ENCODE measurements at regions of chr12 and their contacts with region 1.

Region 1: GRCh38 chr12:125065021-125065795 is at the start of gene AACS:
- DNase-seq: peak in 1 of 2 experiments; percentile 87
- H3K4me3 ChIP-seq: peak within 1 kb of the TSS; percentile 68 to 97 (median 76)
- H3K27ac ChIP-seq: no peak within 1 kb of the TSS; the same call in 1 of the 2 replicates
- H3K4me1 ChIP-seq: peaks cover 6 to 23% (median 11%) of the 10 kb centered on the region in 4 experiments
- H3K27me3 ChIP-seq: no peaks in the 10 kb centered on the region
- CTCF ChIP-seq: peak in 1 of 3 experiments; percentile 12; a peak in 2 of 4 replicates
- EP300 ChIP-seq: peak in 1 of 2 experiments; percentile 60; a peak in 1 of 3 replicates
- POLR2A ChIP-seq: peak; percentile 62 to 77
- RAD21 ChIP-seq: 0 out of 4 replicates have a peak, but pooled peaks of 1 of the 2 experiments have one; percentile 3
- total RNA-seq, gene AACS: 52.4 and 54.6 TPM in 2 replicates

Region 2: DNA sequence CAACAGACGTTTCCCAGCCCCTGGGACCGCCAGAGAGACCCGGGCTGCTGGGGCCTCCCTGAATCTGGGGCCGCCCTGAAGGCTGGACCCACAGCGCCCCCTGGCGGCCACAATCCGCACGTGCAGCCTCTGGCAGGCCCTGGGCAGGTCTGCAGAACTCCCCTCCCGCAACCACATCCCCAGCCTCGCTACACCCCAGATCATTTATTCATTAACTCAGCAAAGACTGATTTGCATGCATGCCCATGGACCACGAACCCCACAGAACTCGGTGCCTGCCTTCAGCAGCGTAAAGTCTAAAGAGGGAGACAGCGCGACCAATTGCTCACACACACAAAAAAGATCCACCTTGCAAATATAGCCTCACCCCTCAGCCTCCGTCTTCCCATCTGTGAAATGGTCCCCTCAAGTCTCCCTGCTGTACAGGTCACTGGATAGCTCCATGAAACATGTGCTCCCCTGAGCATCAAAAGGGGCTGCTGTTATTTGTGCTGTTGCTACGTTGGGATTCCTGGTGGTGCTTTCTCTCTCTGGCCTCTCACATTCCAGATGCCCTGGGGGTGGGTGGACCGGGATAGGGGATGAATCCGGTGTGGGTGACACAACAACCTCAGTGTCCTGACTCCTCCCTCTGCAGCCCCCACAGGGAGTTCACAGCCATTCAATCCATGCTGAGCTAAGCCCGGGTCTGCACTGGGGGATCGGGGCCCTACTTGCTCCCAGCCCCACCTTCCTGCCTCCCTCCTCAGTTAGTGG is 298.0 kb before region 1 on chr12:
- CTCF ChIA-PET with region 1: no interaction called
- POLR2A ChIA-PET with region 1: no interaction called
- DNase-seq: peak in 1 of 2 experiments; percentile 97
- H3K4me3 ChIP-seq: no peak overlapping the region
- H3K27ac ChIP-seq: no peak overlapping the region
- H3K4me1 ChIP-seq: peaks cover 0 to 6% (median 1%) of the 10 kb centered on the region in 4 experiments; a peak in 4 of 7 replicates
- H3K27me3 ChIP-seq: peaks cover 0 to 4% (median 0%) of the 10 kb centered on the region in 4 experiments; a peak in 2 of 7 replicates
- CTCF ChIP-seq: peak; percentile 90 to 94 (median 94)
- EP300 ChIP-seq: no peak
- POLR2A ChIP-seq: no peak
- RAD21 ChIP-seq: peak; percentile 97

Region 3: GRCh38 chr12:124992874-124993625 is 72.2 kb before region 1 on chr12:
- CTCF ChIA-PET with region 1: interaction called, 3 read pairs
- POLR2A ChIA-PET with region 1: interaction called, 14 read pairs
- DNase-seq: peak; percentile 84 to 88
- H3K4me3 ChIP-seq: peak overlapping the region; percentile 43 to 71 (median 60)
- H3K27ac ChIP-seq: no peak overlapping the region
- H3K4me1 ChIP-seq: peaks cover 0 to 8% (median 3%) of the 10 kb centered on the region in 4 experiments; a peak in 5 of 7 replicates
- H3K27me3 ChIP-seq: no peaks in the 10 kb centered on the region; a peak in 1 of 7 replicates
- CTCF ChIP-seq: peak; percentile 75 to 87 (median 84)
- EP300 ChIP-seq: 0 out of 3 replicates have a peak, but pooled peaks of 1 of the 2 experiments have one; percentile 17
- POLR2A ChIP-seq: peak; percentile 30 to 35; a peak in 1 of 3 replicates
- RAD21 ChIP-seq: peak; percentile 40 to 51; a peak in 3 of 4 replicates

Region 4: DNA sequence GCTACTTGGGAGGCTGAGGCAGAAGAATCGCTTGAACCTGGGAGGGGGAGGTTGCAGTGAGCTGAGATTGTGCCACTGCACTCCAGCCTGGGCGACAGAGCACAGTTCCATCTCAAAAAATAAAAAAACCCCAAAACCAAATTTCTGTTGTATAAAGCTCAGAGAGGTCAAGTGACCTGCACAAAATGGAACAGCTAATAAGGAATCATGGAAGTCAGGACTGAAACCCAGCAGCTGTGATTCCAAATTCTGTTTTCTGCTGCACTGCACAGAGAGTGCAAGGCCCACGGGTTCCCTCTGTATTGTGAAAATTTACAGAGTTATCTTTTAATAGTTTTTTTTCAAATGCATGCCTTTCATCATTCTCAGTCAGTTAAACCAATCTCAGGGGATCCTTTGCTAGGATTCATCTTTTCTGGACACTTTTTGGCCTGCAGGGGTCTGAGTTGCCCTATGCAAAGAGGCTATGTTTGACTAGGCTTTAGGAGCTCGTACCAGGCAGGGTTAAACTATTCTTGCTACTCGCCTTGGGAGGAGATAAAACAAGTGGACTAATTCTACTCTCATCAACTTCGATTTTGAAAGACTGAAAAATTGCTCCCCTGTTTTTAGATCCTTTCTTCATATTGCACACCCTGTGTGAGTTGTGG is 26.1 kb before region 1 on chr12:
- CTCF ChIA-PET with region 1: interaction called, 17 read pairs
- POLR2A ChIA-PET with region 1: interaction called, 3 read pairs
- DNase-seq: no peak
- H3K4me3 ChIP-seq: no peak overlapping the region
- H3K27ac ChIP-seq: no peak overlapping the region
- H3K4me1 ChIP-seq: no peaks in the 10 kb centered on the region
- H3K27me3 ChIP-seq: no peaks in the 10 kb centered on the region
- CTCF ChIP-seq: peak in 1 of 3 experiments; percentile 17; a peak in 1 of 4 replicates
- EP300 ChIP-seq: no peak
- POLR2A ChIP-seq: no peak
- RAD21 ChIP-seq: peak; percentile 27 to 47; a peak in 3 of 4 replicates

Region 5: GRCh38 chr12:125049093-125049458 is 16.1 kb before region 1 on chr12:
- CTCF ChIA-PET with region 1: interaction called, 6 read pairs
- POLR2A ChIA-PET with region 1: interaction called, 32 read pairs
- DNase-seq: no peak
- H3K4me3 ChIP-seq: peak overlapping the region; percentile 36 to 63 (median 53); a peak in 7 of 8 replicates
- H3K27ac ChIP-seq: no peak overlapping the region
- H3K4me1 ChIP-seq: no peaks in the 10 kb centered on the region; a peak in 1 of 7 replicates
- H3K27me3 ChIP-seq: no peaks in the 10 kb centered on the region
- CTCF ChIP-seq: 0 out of 4 replicates have a peak, but pooled peaks of 1 of the 3 experiments have one; percentile 1
- EP300 ChIP-seq: no peak
- POLR2A ChIP-seq: no peak
- RAD21 ChIP-seq: no peak

Region 6: GRCh38 chr12:125079648-125080645 is 14.7 kb after region 1 on chr12:
- CTCF ChIA-PET with region 1: interaction called, 12 read pairs
- POLR2A ChIA-PET with region 1: interaction called, 4 read pairs
- DNase-seq: no peak
- H3K4me3 ChIP-seq: no peak overlapping the region
- H3K27ac ChIP-seq: no peak overlapping the region
- H3K4me1 ChIP-seq: no peaks in the 10 kb centered on the region
- H3K27me3 ChIP-seq: no peaks in the 10 kb centered on the region
- CTCF ChIP-seq: no peak
- EP300 ChIP-seq: no peak
- POLR2A ChIP-seq: no peak
- RAD21 ChIP-seq: no peak

Measured in H1 (cell line).